Esophagus muscularis mucosa (tissue), 4 donors: ENCODE measurements at regions of chr2 and their contacts with region 1.

Region 1: GRCh38 chr2:187499941-187500532 is 52.0 kb upstream of the CALCRL start:
- DNase-seq: no peak
- H3K4me3 ChIP-seq: no peak overlapping the region
- H3K27ac ChIP-seq: no peak overlapping the region
- H3K4me1 ChIP-seq: peaks cover 0 to 4% (median 0%) of the 10 kb centered on the region in 4 donors
- H3K27me3 ChIP-seq: no peaks in the 10 kb centered on the region
- CTCF ChIP-seq: peak; percentile 68 to 75 (median 74)
- EP300 ChIP-seq: no peak
- POLR2A ChIP-seq: no peak

Region 2: DNA sequence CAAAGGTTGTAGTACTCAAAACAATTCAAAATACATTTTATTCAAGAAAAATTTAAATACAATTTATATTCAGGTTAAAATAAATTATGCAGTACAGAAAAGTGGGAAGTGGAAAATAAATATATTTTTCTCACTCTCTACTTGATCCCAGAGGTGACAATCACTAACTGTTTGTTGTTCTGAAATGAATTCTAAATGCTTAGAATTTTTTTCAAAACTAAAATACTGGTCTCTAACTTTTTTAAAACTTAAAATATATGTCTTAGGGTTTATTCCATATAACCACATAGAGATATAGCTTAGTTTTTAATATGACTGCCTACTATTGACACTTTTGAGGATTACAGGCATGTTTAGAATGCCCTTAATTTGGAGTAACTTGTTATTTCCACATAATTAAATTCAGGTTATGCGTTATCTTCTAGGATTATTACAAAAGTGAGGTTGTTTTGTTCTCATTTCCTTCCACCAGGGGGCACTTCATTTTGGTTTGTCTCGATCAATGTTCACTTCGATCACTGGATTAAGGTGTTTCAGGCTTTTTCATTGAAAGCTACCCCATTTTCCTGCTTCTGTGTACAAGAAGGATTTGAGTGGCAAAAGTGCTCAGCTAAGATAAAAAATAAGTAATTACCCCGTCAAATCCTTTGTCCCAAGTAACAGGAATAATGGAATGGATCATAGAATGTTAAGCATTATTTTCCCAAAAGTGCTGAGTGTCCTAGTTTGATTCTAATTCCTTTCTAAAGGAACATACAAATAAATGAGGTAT is 81.3 kb after region 1 on chr2:
- intact Hi-C with region 1: loop called (anchors 2 kb)
- DNase-seq: no peak
- H3K4me3 ChIP-seq: peak overlapping the region; percentile 14 to 43 (median 27)
- H3K27ac ChIP-seq: no peak overlapping the region
- H3K4me1 ChIP-seq: peaks cover 6 to 11% (median 8%) of the 10 kb centered on the region in 4 donors
- H3K27me3 ChIP-seq: no peaks in the 10 kb centered on the region
- CTCF ChIP-seq: peak; percentile 45 to 69 (median 58)
- EP300 ChIP-seq: no peak
- POLR2A ChIP-seq: no peak

Region 3: GRCh38 chr2:187618813-187619212 is 118.8 kb after region 1 on chr2:
- intact Hi-C with region 1: no loop called
- DNase-seq: no peak
- H3K4me3 ChIP-seq: no peak overlapping the region
- H3K27ac ChIP-seq: no peak overlapping the region
- H3K4me1 ChIP-seq: no peaks in the 10 kb centered on the region
- H3K27me3 ChIP-seq: no peaks in the 10 kb centered on the region
- CTCF ChIP-seq: no peak
- EP300 ChIP-seq: no peak
- POLR2A ChIP-seq: no peak

Region 4: GRCh38 chr2:188512456-188512855 is 1012.4 kb after region 1 on chr2:
- intact Hi-C with region 1: loop called (anchors 10 kb)
- DNase-seq: no peak
- H3K4me3 ChIP-seq: no peak overlapping the region
- H3K27ac ChIP-seq: no peak overlapping the region
- H3K4me1 ChIP-seq: peaks cover 0 to 5% (median 2%) of the 10 kb centered on the region in 4 donors
- H3K27me3 ChIP-seq: no peaks in the 10 kb centered on the region
- CTCF ChIP-seq: peak; percentile 48 to 53 (median 52)
- EP300 ChIP-seq: no peak
- POLR2A ChIP-seq: no peak